CD8-positive, alpha-beta memory T cell (primary cell): ENCODE measurements at regions of chr16 and their contacts with region 1.

Region 1: GRCh38 chr16:68528686-68529379 is 10.3 kb upstream of the ZFP90 start:
- DNase-seq: peak; percentile 80 to 91 (median 83)
- H3K4me3 ChIP-seq: no peak overlapping the region
- H3K4me3 Mint-ChIP-seq: peak overlapping the region; percentile 76 to 94 (median 87)
- H3K27ac ChIP-seq: no peak overlapping the region
- H3K27ac Mint-ChIP-seq: peak overlapping the region in 7 of 8 donors; percentile 45 to 88 (median 70)
- H3K4me1 ChIP-seq: peaks cover 19% of the 10 kb centered on the region
- H3K4me1 Mint-ChIP-seq: peaks cover 13 to 22% (median 19%) of the 10 kb centered on the region in 3 donors
- H3K27me3 ChIP-seq: no peaks in the 10 kb centered on the region
- H3K27me3 Mint-ChIP-seq: no peaks in the 10 kb centered on the region

Region 2: DNA sequence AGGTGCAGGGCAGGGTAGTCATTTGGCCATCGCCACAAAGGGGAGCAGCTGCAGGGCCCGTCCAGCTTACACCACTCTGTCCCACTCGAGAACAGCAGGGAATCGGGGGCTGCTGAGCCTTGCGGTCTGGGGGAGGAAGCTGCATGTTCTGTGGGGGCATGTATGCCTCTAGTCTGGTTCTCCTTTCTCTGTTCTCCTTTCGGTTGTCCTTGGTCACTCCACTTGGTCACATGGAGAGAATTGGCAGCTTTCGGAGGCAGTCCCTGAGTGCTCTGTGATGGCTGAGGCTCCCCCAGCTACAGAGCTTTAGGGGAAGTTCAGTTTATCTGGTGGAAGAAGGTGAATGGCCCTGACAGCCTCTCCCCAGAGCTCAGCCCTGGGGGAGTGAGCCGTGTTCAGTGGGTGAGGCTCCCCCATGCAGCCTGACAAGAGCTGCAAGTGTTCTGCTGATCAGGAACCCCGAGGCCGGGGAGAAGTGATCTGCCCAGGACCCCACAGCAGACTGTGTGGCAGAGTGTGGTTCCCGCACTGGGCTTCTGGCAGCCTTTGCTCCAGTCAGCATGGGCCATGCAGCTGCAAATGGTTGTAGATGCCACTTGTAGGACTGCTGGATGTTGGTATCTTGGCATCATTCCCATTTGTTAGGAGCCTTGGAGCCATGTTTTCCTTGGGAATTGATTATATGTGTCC is 58.2 kb before region 1 on chr16:
- CTCF ChIA-PET with region 1: no interaction called
- POLR2A ChIA-PET with region 1: no interaction called
- DNase-seq: peak in 1 of 5 donors; percentile 27
- H3K4me3 ChIP-seq: peak overlapping the region; percentile 52
- H3K4me3 Mint-ChIP-seq: peak overlapping the region; percentile 24 to 94 (median 87)
- H3K27ac ChIP-seq: no peak overlapping the region
- H3K27ac Mint-ChIP-seq: peak overlapping the region; percentile 4 to 91 (median 88)
- H3K4me1 ChIP-seq: peaks cover 39% of the 10 kb centered on the region
- H3K4me1 Mint-ChIP-seq: peaks cover 40 to 53% (median 52%) of the 10 kb centered on the region in 3 donors
- H3K27me3 ChIP-seq: no peaks in the 10 kb centered on the region
- H3K27me3 Mint-ChIP-seq: no peaks in the 10 kb centered on the region

Region 3: GRCh38 chr16:68499006-68499405 is 29.8 kb before region 1 on chr16:
- CTCF ChIA-PET with region 1: no interaction called
- POLR2A ChIA-PET with region 1: no interaction called
- DNase-seq: no peak
- H3K4me3 ChIP-seq: no peak overlapping the region
- H3K4me3 Mint-ChIP-seq: no peak overlapping the region
- H3K27ac ChIP-seq: no peak overlapping the region
- H3K27ac Mint-ChIP-seq: no peak overlapping the region
- H3K4me1 ChIP-seq: no peaks in the 10 kb centered on the region
- H3K4me1 Mint-ChIP-seq: no peaks in the 10 kb centered on the region
- H3K27me3 ChIP-seq: no peaks in the 10 kb centered on the region
- H3K27me3 Mint-ChIP-seq: peaks cover 0 to 6% of the 10 kb centered on the region in 2 donors

Region 4: GRCh38 chr16:68538880-68539701 is 10.3 kb after region 1 on chr16 and contains the start of gene ZFP90:
- CTCF ChIA-PET with region 1: interaction called, 27 read pairs
- POLR2A ChIA-PET with region 1: interaction called, 3 read pairs
- DNase-seq: peak; percentile 76 to 87 (median 83)
- H3K4me3 ChIP-seq: peak within 1 kb of the TSS; percentile 89
- H3K4me3 Mint-ChIP-seq: peak within 1 kb of the TSS; percentile 93 to 100 (median 99)
- H3K27ac ChIP-seq: peak within 1 kb of the TSS; percentile 80
- H3K27ac Mint-ChIP-seq: peak within 1 kb of the TSS; percentile 96 to 100 (median 100)
- H3K4me1 ChIP-seq: peaks cover 13% of the 10 kb centered on the region
- H3K4me1 Mint-ChIP-seq: peaks cover 22 to 34% (median 33%) of the 10 kb centered on the region in 3 donors
- H3K27me3 ChIP-seq: no peaks in the 10 kb centered on the region
- H3K27me3 Mint-ChIP-seq: no peaks in the 10 kb centered on the region
- total RNA-seq, gene ZFP90: 22.4 to 24.3 TPM

Region 5: DNA sequence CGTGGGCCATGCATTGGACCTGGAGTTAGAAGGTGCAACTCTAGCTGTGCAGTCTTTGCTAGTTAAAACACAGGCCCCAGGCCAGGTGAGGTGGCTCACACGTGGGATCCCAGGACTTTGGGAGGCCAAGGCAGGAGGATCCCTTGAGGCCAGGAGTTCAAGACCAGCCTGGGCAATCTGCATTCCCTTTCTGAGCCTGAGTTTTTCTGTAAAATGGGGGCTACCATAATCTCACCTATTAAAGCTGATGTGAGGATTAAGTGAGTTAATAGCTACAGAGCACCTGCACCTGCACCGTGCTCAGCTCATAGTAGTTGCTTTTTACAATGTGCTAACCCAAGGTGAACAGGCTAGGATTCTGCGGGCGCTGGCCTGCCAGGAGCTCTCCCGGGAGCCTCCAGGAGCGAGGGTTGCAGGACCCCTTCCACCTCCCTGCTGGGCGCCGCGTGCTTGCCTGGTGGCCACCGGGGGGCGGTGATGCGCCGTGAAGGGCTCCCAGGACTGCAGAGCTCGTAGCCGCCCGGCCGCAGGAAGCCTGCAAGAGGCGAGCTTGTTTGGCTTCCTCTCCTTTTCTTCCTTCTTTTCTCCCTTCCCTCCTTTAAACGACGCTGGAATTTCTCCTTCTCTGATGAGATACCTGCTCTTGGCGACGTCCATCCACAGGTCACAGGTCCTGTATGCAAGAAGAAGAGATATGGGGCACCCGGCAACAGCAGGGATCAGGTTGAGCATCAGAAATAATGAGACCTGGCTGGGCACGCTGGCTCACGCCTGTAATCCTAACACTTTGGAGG is 61.6 kb after region 1 on chr16:
- CTCF ChIA-PET with region 1: interaction called, 55 read pairs
- POLR2A ChIA-PET with region 1: no interaction called
- DNase-seq: peak; percentile 26 to 59 (median 45)
- H3K4me3 ChIP-seq: no peak overlapping the region
- H3K4me3 Mint-ChIP-seq: peak overlapping the region in 4 of 7 donors; percentile 5 to 45 (median 24)
- H3K27ac ChIP-seq: no peak overlapping the region
- H3K27ac Mint-ChIP-seq: no peak overlapping the region
- H3K4me1 ChIP-seq: no peaks in the 10 kb centered on the region
- H3K4me1 Mint-ChIP-seq: peaks cover 4 to 8% (median 5%) of the 10 kb centered on the region in 3 donors
- H3K27me3 ChIP-seq: no peaks in the 10 kb centered on the region
- H3K27me3 Mint-ChIP-seq: peaks cover 0 to 2% of the 10 kb centered on the region in 2 donors

Region 6: GRCh38 chr16:68843482-68844210 is 314.8 kb after region 1 on chr16 and contains the start of gene TANGO6:
- CTCF ChIA-PET with region 1: interaction called, 12 read pairs
- POLR2A ChIA-PET with region 1: no interaction called
- DNase-seq: peak; percentile 83 to 93 (median 87)
- H3K4me3 ChIP-seq: peak within 1 kb of the TSS; percentile 91
- H3K4me3 Mint-ChIP-seq: peak within 1 kb of the TSS; percentile 77 to 98 (median 85)
- H3K27ac ChIP-seq: peak within 1 kb of the TSS; percentile 82
- H3K27ac Mint-ChIP-seq: peak within 1 kb of the TSS; percentile 76 to 98 (median 92)
- H3K4me1 ChIP-seq: peaks cover 20% of the 10 kb centered on the region
- H3K4me1 Mint-ChIP-seq: peaks cover 26 to 38% (median 37%) of the 10 kb centered on the region in 3 donors
- H3K27me3 ChIP-seq: no peaks in the 10 kb centered on the region
- H3K27me3 Mint-ChIP-seq: no peaks in the 10 kb centered on the region
- total RNA-seq, gene TANGO6: 28.9 to 30.3 TPM

Region 7: GRCh38 chr16:69123910-69124309 is 595.1 kb after region 1 on chr16:
- CTCF ChIA-PET with region 1: interaction called, 29 read pairs
- POLR2A ChIA-PET with region 1: no interaction called
- DNase-seq: peak; percentile 53 to 73 (median 56)
- H3K4me3 ChIP-seq: no peak overlapping the region
- H3K4me3 Mint-ChIP-seq: peak overlapping the region in 1 of 7 donors; percentile 36
- H3K27ac ChIP-seq: no peak overlapping the region
- H3K27ac Mint-ChIP-seq: peak overlapping the region in 4 of 8 donors; percentile 3 to 70 (median 28)
- H3K4me1 ChIP-seq: no peaks in the 10 kb centered on the region
- H3K4me1 Mint-ChIP-seq: peaks cover 16 to 48% (median 28%) of the 10 kb centered on the region in 3 donors
- H3K27me3 ChIP-seq: no peaks in the 10 kb centered on the region
- H3K27me3 Mint-ChIP-seq: no peaks in the 10 kb centered on the region